Breast epithelium (tissue), 4 donors: ENCODE measurements at regions of chr4 and their contacts with region 1.

Region 1: GRCh38 chr4:77393996-77394395 is 211.6 kb upstream of the CXCL13 start:
- DNase-seq: no peak
- H3K4me3 ChIP-seq: no peak overlapping the region
- H3K27ac ChIP-seq: no peak overlapping the region
- H3K4me1 ChIP-seq: no peaks in the 10 kb centered on the region
- H3K27me3 ChIP-seq: no peaks in the 10 kb centered on the region
- CTCF ChIP-seq: no peak
- POLR2A ChIP-seq: no peak

Region 2: DNA sequence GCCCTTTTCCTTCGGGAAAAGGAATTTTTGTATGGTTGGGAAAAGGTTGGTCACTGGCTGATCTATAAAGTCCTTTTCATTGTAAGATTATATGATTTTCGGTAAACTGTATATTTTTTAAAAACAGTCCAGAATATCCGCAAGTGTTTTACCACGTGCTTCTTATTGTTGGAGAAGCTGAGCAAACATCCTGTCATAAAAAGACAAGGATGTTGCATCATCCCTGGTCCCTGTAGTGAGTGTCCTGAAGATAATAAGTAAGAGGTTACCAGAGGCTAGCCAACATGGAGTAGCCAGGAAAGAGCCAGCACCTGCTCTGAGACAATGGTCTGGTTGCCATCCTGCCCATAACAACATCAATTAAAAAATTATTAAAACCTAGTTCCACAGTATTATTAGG is 1391.8 kb before region 1 on chr4:
- intact Hi-C with region 1: no loop called
- DNase-seq: no peak
- H3K4me3 ChIP-seq: no peak overlapping the region
- H3K27ac ChIP-seq: no peak overlapping the region
- H3K4me1 ChIP-seq: no peaks in the 10 kb centered on the region
- H3K27me3 ChIP-seq: no peaks in the 10 kb centered on the region
- CTCF ChIP-seq: no peak
- POLR2A ChIP-seq: no peak

Region 3: GRCh38 chr4:77434299-77435092 is 40.5 kb after region 1 on chr4:
- intact Hi-C with region 1: no loop called
- DNase-seq: no peak
- H3K4me3 ChIP-seq: no peak overlapping the region
- H3K27ac ChIP-seq: no peak overlapping the region
- H3K4me1 ChIP-seq: no peaks in the 10 kb centered on the region
- H3K27me3 ChIP-seq: no peaks in the 10 kb centered on the region
- CTCF ChIP-seq: no peak
- POLR2A ChIP-seq: no peak

Region 4: GRCh38 chr4:77599378-77599777 is 205.4 kb after region 1 on chr4:
- intact Hi-C with region 1: loop called (anchors 5 kb)
- DNase-seq: no peak
- H3K4me3 ChIP-seq: no peak overlapping the region
- H3K27ac ChIP-seq: no peak overlapping the region
- H3K4me1 ChIP-seq: no peaks in the 10 kb centered on the region
- H3K27me3 ChIP-seq: no peaks in the 10 kb centered on the region
- CTCF ChIP-seq: peak; percentile 32 to 40 (median 33)
- POLR2A ChIP-seq: no peak